Activated T-helper 1 cell treated with anti-CD3 and anti-CD28 coated beads, Interleukin-12 subunit alpha, Interleukin-12 subunit beta, Interleukin-2, Interleukin-4 antibody, amounts not matched to agents 30 ng/mL and 10 ng/mL and 1 ng/mL, durations not matched to agents 14 hours and 24 hours and 36 hours (primary cell): ENCODE measurements at regions of chr3 and their contacts with region 1.

Region 1: DNA sequence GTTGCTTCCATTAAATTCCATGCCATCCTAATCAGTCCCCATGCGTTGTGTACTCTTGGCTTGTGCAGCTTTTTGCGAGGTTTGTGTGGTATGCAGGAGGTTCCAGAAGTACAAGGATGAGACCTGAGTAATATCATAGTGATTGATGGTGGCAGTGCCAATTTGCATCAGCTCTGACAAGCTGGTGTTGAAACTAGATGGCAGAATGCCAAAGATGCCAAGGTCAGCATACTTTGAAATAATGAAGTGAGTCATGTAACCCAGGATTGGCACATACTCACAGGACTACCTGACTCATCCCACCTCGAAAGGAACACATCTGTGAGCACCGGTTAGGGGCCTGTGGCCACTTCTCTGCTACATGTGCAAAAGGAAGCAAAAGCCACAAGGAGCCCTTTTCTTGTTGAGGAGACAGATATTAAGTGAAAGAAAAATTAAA is 14.3 kb downstream of the KAT2B start:
- DNase-seq: peak; percentile 54
- H3K4me3 Mint-ChIP-seq: no peak overlapping the region
- H3K27ac Mint-ChIP-seq: no peak overlapping the region
- H3K4me1 Mint-ChIP-seq: peaks cover 37% of the 10 kb centered on the region
- H3K27me3 Mint-ChIP-seq: no peaks in the 10 kb centered on the region

Region 2: DNA sequence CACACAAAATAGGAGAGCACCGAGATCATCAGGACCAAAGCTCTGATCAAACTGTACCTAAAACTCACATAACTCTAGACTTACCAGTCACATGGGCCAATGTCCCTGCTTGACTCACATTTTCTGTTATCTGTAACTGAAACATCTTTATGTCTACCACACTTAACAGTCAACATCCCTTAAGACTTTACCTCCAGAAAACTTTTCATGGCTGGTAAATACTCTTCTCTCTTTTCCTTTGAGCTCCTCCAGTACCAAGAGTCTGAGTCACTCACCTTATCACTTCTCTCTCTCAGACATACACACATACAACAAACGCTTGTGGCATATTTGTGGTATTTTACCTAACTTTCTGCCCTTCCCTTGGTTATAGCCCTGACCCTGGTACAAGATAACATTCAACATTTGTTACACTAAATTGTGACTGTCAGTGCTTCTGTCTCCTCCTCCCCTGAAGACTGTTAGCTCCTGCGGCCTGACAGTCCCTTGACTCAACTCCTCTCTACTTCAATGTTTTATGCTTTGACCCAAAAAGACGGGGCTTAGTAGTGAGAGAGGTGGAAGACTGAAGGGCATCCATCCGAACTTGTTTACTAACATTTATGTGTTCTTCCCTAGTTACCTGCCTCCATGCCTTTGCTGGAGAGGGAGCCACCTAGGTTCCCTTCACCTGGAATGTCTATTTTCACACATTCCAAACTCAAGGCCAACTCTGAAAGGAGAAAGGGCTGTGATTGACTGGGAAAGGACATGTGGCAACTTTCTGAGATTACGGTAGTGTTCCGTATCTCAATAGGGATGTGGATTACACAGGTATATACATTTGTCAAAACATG is 116.9 kb before region 1 on chr3:
- intact Hi-C with region 1: loop called (anchors 1 kb)
- DNase-seq: no peak
- H3K4me3 Mint-ChIP-seq: no peak overlapping the region
- H3K27ac Mint-ChIP-seq: peak overlapping the region; percentile 81
- H3K4me1 Mint-ChIP-seq: peaks cover 35% of the 10 kb centered on the region
- H3K27me3 Mint-ChIP-seq: peaks cover 3% of the 10 kb centered on the region

Region 3: GRCh38 chr3:19946832-19947548 is 107.6 kb before region 1 on chr3 and contains the start of gene RAB5A:
- intact Hi-C with region 1: loop called (anchors 2 kb)
- DNase-seq: peak; percentile 96
- H3K4me3 Mint-ChIP-seq: peak within 1 kb of the TSS; percentile 92
- H3K27ac Mint-ChIP-seq: peak within 1 kb of the TSS; percentile 97
- H3K4me1 Mint-ChIP-seq: peaks cover 47% of the 10 kb centered on the region
- H3K27me3 Mint-ChIP-seq: no peaks in the 10 kb centered on the region
- total RNA-seq, gene RAB5A: 62.2 and 64.0 TPM in 2 replicates

Region 4: DNA sequence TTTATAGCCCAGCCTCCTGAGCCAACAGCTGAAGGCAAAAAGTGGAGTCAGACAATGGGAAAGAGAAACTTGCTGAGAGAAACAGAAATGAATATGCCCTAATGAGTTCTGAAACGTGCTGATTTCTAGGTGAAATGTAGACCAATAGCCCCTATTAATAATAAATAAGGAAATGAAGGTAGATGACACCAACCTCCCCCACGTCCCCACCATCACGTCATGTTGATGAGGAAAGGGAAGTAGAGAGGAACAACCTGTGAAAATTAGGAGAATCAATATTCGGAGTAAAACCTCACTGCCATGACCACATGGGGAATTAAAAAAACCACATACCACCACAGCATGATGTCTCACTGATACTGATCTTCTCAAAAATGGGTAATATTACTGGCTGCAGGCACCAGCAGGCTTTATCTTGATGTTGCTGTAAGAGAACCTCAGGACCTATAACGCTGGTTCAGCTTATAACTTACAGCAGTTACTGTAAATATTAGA is 49.6 kb after region 1 on chr3:
- intact Hi-C with region 1: loop called (anchors 1 kb)
- DNase-seq: peak; percentile 52
- H3K4me3 Mint-ChIP-seq: peak overlapping the region; percentile 52
- H3K27ac Mint-ChIP-seq: peak overlapping the region; percentile 93
- H3K4me1 Mint-ChIP-seq: peaks cover 79% of the 10 kb centered on the region
- H3K27me3 Mint-ChIP-seq: no peaks in the 10 kb centered on the region

Region 5: GRCh38 chr3:20185701-20186598 is 131.4 kb after region 1 on chr3 and contains the start of gene SGO1:
- intact Hi-C with region 1: loop called (anchors 1 kb)
- DNase-seq: peak; percentile 100
- H3K4me3 Mint-ChIP-seq: no peak within 1 kb of the TSS
- H3K27ac Mint-ChIP-seq: no peak within 1 kb of the TSS
- H3K4me1 Mint-ChIP-seq: no peaks in the 10 kb centered on the region
- H3K27me3 Mint-ChIP-seq: no peaks in the 10 kb centered on the region
- total RNA-seq, gene SGO1: 17.8 and 18.3 TPM in 2 replicates